ENCODE measurements at regions of chr14 and their contacts with region 1.

Region 1: DNA sequence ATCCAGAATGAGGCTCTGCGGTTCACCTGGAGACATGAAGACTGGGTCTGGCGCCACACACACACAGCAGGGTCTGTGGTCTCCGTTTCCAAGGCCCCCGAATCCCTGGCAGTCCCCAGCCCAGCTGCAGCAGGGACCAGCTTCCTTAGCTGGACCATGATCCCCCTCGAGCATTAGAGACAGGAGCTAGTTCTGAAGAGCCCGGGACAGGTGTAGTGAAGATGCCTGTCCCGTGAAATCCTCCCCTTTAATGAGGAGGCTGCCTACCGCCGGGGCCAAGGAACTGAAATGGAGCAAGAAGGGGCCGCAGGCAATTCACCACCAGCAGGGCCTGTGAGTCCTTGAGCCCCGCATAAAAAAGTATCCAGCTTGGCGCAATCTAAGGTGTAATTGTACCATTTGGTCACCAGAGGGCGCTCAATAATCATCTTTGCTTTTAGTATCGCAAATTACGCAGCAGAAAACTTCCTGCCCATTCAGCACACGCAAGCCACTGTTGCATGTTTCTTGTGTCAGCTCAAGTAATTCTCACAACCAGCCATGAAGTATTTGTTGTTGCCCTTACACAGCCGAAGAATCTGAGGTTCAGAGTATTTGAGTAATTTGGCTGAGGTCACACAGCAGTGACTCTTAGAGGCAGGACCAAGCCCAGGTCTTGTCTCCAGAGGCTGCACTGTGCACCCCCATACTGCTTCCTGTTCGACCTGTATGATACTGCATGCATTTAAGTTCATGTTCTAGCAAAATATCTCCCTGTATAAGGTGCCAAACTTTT is 54.3 kb upstream of the PPP2R5C start:
- DNase-seq: peak; percentile 74
- ATAC-seq: peak; percentile 79
- H3K4me3 Mint-ChIP-seq: peak overlapping the region; percentile 33
- H3K27ac Mint-ChIP-seq: peak overlapping the region; percentile 81
- H3K4me1 Mint-ChIP-seq: peaks cover 29% of the 10 kb centered on the region
- H3K27me3 Mint-ChIP-seq: no peaks in the 10 kb centered on the region

Region 2: GRCh38 chr14:101731187-101732080 is 24.2 kb after region 1 on chr14:
- CTCF ChIA-PET with region 1: interaction called, 9 read pairs
- POLR2A ChIA-PET with region 1: interaction called, 3 read pairs
- intact Hi-C with region 1: loop called (anchors 1 kb)
- DNase-seq: peak; percentile 94
- ATAC-seq: peak; percentile 92
- H3K4me3 Mint-ChIP-seq: peak overlapping the region; percentile 66
- H3K27ac Mint-ChIP-seq: peak overlapping the region; percentile 97
- H3K4me1 Mint-ChIP-seq: peaks cover 64% of the 10 kb centered on the region
- H3K27me3 Mint-ChIP-seq: no peaks in the 10 kb centered on the region

Region 3: DNA sequence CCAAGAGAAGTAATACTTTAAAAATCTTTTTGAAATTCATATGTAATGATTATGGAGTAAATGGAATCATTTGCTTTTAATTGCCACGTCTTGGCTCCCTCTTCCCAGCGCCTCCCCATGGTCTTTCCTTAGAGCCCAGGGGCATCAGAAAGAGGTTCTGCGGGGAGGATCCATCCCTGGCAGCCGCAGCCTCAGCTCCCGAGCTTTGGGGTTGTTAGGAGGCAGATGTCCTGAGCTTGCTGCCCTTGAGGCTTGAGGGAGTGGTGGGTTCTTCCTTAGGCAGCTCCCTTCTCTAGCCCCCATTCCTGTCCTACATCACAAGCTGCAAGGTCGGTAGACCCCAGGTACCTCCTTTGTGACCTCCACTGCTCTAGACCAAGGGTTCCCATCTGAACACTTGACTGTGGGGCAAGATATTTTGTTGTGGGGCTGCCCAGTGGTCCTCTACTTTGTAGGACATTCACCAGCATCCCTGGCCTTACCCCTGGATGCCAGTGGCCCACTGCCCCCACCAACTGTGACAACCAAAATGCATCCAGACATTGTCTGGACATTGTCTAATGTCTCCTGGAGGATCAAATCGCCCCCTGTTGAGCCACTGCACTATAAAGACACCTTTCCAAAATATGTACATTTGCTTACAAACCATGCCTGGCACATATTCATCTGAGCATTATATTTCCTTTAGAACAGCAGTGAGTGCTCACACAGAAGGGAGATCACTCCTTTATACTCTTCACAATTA is 60.5 kb after region 1 on chr14:
- CTCF ChIA-PET with region 1: interaction called, 23 read pairs
- POLR2A ChIA-PET with region 1: no interaction called
- intact Hi-C with region 1: loop called in 1 of 2 experiments (anchors 1 kb)
- DNase-seq: no peak
- ATAC-seq: no peak
- H3K4me3 Mint-ChIP-seq: no peak overlapping the region
- H3K27ac Mint-ChIP-seq: no peak overlapping the region
- H3K4me1 Mint-ChIP-seq: peaks cover 42% of the 10 kb centered on the region
- H3K27me3 Mint-ChIP-seq: no peaks in the 10 kb centered on the region

Region 4: GRCh38 chr14:101876555-101876938 is 169.3 kb after region 1 on chr14:
- CTCF ChIA-PET with region 1: interaction called, 9 read pairs
- POLR2A ChIA-PET with region 1: no interaction called
- intact Hi-C with region 1: loop called in 1 of 2 experiments (anchors 2 kb)
- DNase-seq: peak; percentile 86
- ATAC-seq: peak; percentile 62
- H3K4me3 Mint-ChIP-seq: peak overlapping the region; percentile 66
- H3K27ac Mint-ChIP-seq: peak overlapping the region; percentile 94
- H3K4me1 Mint-ChIP-seq: peaks cover 91% of the 10 kb centered on the region
- H3K27me3 Mint-ChIP-seq: no peaks in the 10 kb centered on the region

Region 5: GRCh38 chr14:101964297-101965144 is 257.3 kb after region 1 on chr14 and contains the start of gene DYNC1H1:
- CTCF ChIA-PET with region 1: interaction called, 4 read pairs
- POLR2A ChIA-PET with region 1: no interaction called
- intact Hi-C with region 1: loop called (anchors 1 to 2 kb)
- DNase-seq: peak; percentile 93
- ATAC-seq: peak; percentile 82
- H3K4me3 Mint-ChIP-seq: peak within 1 kb of the TSS; percentile 89
- H3K27ac Mint-ChIP-seq: peak within 1 kb of the TSS; percentile 91
- H3K4me1 Mint-ChIP-seq: peaks cover 39% of the 10 kb centered on the region
- H3K27me3 Mint-ChIP-seq: no peaks in the 10 kb centered on the region
- total RNA-seq, gene DYNC1H1: 283 to 293 TPM

Region 6: DNA sequence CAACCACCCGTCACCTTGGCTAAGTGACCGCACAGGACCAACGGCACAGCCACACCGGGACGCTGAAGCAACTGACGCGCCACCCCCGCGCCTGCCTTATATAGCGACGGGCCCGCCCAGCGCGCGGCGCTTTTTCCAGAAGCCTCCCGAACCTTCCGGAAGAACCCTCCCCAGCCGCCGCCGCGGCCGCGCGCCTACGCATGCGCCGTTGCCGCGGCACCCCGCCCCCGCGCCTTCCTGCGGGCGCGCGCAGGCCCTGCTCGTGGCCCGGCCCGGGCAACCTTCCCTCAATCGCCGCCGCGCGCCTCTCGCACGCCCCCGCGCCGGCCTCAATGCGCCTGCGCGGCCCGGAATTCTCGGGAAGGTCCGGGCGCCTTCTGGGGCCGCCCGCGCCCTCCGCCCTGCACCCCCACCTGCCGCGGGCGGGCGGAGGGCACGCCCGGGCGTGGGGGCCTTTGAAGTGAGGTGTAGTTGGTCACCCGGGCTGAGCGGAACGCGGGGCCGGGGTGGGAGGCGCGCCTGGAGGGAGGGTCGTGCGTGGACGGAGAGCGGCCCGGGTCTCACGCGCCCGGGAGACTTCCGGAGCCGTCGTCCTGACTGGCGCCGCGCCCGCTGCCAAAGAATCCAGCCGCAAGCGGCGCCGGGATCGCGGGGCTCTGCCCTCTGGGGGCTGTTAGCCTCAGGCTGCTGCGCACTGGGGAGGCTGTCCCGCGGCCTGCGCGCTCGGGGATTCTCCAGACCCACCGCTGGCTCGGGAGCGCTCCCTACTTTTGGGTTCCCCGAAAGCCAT is 379.9 kb after region 1 on chr14 and contains the start of gene HSP90AA1:
- CTCF ChIA-PET with region 1: interaction called, 4 read pairs
- POLR2A ChIA-PET with region 1: no interaction called
- intact Hi-C with region 1: loop called (anchors 2 to 10 kb)
- DNase-seq: peak; percentile 97
- ATAC-seq: peak; percentile 68
- H3K4me3 Mint-ChIP-seq: peak within 1 kb of the TSS; percentile 77
- H3K27ac Mint-ChIP-seq: peak within 1 kb of the TSS; percentile 92
- H3K4me1 Mint-ChIP-seq: peaks cover 46% of the 10 kb centered on the region
- H3K27me3 Mint-ChIP-seq: no peaks in the 10 kb centered on the region
- total RNA-seq, gene HSP90AA1: 1,344 to 1,372 TPM

Region 7: DNA sequence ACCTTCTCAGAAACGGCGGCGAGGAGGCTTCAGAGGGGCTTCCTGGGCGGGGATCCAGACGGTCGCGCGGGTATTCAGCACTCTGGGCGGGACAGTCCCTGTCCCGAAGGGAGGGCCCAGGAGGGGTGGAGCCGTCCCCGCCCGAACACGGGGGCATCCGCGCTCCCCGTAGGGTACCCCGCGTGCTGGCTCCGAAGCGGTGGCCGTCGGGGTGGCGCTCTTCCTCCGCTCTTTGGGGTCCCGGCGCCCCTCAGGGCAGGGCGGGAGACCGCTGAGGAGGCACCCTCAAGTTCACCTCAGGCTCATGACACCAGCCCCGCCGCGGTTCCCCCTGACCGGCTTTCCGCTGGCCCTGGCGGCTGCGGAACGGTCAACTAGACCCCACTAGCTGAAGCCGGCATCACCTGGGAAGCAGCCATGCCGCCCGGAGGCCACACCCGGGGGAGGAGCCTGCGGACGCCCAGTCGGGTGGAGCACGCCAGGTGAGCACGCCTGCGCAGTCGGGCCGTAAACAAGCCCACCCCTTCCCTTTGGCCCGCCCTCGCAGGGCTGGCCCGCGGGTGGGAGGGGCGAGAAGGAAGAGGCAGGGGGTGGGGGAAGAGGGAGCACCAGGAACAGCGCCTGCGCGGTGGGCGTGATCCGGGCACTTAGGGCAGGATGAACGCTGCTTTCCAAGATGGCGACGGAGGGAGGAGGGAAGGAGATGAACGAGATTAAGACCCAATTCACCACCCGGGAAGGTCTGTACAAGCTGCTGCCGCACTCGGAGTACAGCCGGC is 432.2 kb after region 1 on chr14 and contains the start of gene WDR20:
- CTCF ChIA-PET with region 1: no interaction called
- POLR2A ChIA-PET with region 1: no interaction called
- intact Hi-C with region 1: loop called in 1 of 2 experiments (anchors 1 kb)
- DNase-seq: peak; percentile 100
- ATAC-seq: peak; percentile 94
- H3K4me3 Mint-ChIP-seq: peak within 1 kb of the TSS; percentile 96
- H3K27ac Mint-ChIP-seq: peak within 1 kb of the TSS; percentile 94
- H3K4me1 Mint-ChIP-seq: peaks cover 21% of the 10 kb centered on the region
- H3K27me3 Mint-ChIP-seq: no peaks in the 10 kb centered on the region
- total RNA-seq, gene WDR20: 18.2 to 24.8 TPM

Measured in activated CD4-positive, alpha-beta T cell treated with anti-CD3 and anti-CD28 coated beads for 36 hours (primary cell).